Pancreas (tissue), 10 donors: ENCODE measurements at regions of chr9 and their contacts with region 1.

Region 1: DNA sequence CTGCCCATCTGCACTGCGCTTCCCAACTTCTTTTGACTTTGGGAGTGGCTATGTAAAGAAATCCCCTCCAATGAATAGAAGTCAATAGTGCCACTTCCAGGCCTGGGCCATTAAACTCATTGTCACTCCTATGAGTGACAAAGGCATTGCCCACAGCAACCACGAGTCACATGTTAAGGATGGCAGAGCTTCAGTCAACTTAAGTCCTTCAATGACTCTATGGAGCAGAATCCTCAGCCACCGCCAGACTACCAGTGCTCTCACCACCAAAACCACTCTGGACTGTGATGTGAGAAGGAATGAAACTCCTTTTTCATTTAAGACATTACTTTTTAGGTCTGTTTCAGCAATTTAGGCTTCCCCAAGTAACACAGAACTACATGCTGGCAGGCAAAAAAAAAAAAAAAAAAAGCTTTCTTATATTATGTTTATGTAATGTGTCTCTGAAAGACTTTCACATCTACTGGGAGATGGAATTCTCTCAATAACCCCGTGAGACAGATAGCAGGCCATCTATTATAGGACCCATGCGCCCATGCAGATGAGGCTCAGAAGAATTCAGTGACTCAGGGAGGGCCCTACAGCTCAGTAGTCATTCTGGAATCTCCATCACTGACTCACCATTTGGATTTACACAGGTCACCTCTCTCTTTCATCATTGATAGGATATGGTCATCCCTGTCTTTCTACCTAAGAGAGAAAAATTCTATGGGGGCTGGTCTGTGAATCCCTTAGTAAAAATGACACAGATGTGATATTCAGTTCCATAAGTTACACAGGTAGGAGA is 180.5 kb downstream of the CEMIP2 start:
- DNase-seq: no peak
- ATAC-seq: no peak
- H3K4me3 ChIP-seq: no peak overlapping the region
- H3K27ac ChIP-seq: no peak overlapping the region
- H3K4me1 ChIP-seq: no peaks in the 10 kb centered on the region
- H3K27me3 ChIP-seq: no peaks in the 10 kb centered on the region
- CTCF ChIP-seq: no peak

Region 2: GRCh38 chr9:71431931-71432330 is 155.8 kb before region 1 on chr9:
- intact Hi-C with region 1: no loop called
- DNase-seq: no peak
- ATAC-seq: no peak
- H3K4me3 ChIP-seq: no peak overlapping the region
- H3K27ac ChIP-seq: no peak overlapping the region
- H3K4me1 ChIP-seq: no peaks in the 10 kb centered on the region
- H3K27me3 ChIP-seq: peaks cover 0 to 4% (median 0%) of the 10 kb centered on the region in 4 donors
- CTCF ChIP-seq: no peak

Region 3: GRCh38 chr9:71524996-71525580 is 62.7 kb before region 1 on chr9:
- intact Hi-C with region 1: loop called in 1 of 3 experiments (anchors 10 kb)
- DNase-seq: peak in 2 of 6 donors; percentile 14 to 45
- ATAC-seq: no peak
- H3K4me3 ChIP-seq: no peak overlapping the region
- H3K27ac ChIP-seq: no peak overlapping the region
- H3K4me1 ChIP-seq: no peaks in the 10 kb centered on the region
- H3K27me3 ChIP-seq: no peaks in the 10 kb centered on the region
- CTCF ChIP-seq: no peak